Dendritic cell treated with granulocyte-macrophage colony-stimulating factor and Interleukin-4, amounts not matched to agents 40 ng/mL and 50 ng/mL, for 4 days (primary cell): ENCODE measurements at regions of chr4 and their contacts with region 1.

Region 1: GRCh38 chr4:169659716-169660670 is 39.6 kb downstream of the CLCN3 start:
- H3K4me3 Mint-ChIP-seq: peak overlapping the region; percentile 55
- H3K27ac Mint-ChIP-seq: peak overlapping the region; percentile 71
- H3K4me1 Mint-ChIP-seq: peaks cover 12% of the 10 kb centered on the region
- H3K27me3 Mint-ChIP-seq: no peaks in the 10 kb centered on the region

Region 2: DNA sequence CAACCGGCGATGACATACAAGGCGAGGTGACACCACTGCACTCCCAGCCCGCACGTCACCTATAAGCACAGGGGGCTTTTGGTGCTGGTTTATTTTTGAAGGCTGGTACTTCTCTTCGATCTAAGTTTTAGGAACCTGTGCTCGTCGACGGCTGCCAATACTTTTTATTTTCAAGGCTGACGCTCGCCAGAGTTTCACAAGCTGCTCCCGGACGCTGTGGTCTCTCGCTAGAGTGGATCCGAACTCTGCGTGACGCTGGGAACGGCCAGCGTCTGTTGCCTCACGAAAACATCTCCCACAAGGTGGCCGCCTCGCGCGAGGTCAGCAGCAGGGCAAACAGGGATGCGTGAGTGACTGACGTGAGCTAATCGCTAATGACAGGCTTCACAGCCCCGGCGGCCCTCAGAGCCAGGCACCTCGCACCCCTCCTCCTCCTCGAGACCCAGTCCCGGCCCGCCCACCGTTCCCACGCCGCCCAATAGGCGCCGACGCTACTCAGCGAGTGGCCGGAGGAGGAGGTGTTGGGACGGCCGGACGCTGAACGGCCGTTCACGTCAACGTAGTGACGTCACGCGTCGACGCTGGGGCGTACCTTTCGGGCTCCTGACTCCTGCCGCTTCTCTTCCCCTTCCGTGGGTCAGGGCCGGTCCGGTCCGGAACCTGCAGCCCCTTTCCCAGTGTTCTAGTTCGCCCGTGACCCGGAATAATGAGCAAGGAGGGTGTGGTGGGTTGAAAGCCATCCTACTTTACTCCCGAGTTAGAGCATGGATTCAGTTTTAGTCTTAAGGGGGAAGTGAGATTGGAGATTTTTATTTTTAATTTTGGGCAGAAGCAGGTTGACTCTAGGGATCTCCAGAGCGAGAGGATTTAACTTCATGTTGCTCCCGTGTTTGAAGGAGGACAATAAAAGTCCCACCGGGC is 39.8 kb before region 1 on chr4 and contains the start of gene CLCN3:
- intact Hi-C with region 1: loop called (anchors 5 kb)
- H3K4me3 Mint-ChIP-seq: peak within 1 kb of the TSS; percentile 96
- H3K27ac Mint-ChIP-seq: peak within 1 kb of the TSS; percentile 95
- H3K4me1 Mint-ChIP-seq: peaks cover 23% of the 10 kb centered on the region
- H3K27me3 Mint-ChIP-seq: no peaks in the 10 kb centered on the region

Region 3: DNA sequence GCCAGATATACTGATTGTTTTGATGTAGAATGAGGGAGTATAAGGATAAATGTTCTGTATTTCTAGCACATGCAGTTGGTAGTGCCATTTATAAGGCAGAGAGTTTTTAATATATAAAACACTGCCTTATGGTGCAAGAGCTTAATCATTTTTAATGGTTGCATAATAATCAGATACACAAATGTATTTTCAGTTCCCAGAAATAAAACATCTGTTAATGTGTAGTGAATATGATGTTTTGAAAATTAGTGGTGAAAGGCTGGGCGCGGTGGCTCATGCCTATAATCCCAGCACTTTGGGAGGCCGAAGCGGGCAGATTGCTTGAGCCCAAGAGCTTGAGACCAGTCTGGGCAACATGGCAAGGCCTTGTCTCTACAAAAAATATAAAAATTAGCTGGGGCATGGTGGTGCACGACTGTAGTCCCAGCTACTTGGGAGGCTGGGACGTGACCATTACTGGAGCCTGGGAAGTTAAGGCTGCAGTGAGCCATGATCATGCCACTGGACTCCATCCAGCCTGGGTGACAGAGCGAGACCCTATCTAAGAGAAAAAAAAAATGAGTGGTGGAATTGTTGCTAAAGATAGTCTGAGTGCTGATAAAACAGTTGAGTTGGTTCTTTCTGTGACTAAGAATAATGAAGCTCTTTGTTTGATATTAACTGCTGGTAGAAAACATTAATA is 10.3 kb before region 1 on chr4:
- intact Hi-C with region 1: no loop called
- H3K4me3 Mint-ChIP-seq: no peak overlapping the region
- H3K27ac Mint-ChIP-seq: no peak overlapping the region
- H3K4me1 Mint-ChIP-seq: peaks cover 16% of the 10 kb centered on the region
- H3K27me3 Mint-ChIP-seq: no peaks in the 10 kb centered on the region